ENCODE measurements at regions of chr12 and their contacts with region 1.

Region 1: DNA sequence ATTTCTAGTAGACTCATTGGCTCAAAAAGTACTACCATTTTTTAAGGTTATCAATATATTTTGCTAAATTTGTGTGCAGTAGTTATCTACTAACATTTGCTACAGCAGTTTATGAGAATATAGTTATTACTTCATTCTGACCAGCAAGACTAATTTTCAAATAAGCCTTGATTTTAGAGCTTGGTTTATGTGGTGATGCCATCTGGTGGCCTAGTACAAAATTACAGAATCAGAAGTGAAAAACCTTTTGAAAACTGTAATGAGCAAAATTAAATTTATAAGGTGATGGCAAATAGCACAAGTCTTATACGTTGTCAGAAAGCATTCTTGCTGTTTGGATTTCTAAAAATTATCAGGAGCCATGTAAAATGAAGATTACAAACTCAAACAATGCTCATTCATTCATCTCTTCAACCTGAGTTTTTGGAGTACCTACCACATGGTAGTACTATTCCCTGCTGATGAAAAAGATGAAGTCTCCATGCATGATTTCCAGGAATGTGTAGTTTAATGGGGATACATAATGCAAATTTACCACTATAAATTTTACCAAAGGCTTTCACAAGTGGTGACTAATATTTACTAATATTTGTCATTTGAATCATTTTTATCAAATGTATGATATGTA is 51.0 kb downstream of the MAGOHB start:
- DNase-seq: no peak
- CTCF ChIP-seq: peak; percentile 54

Region 2: GRCh38 chr12:10235761-10236631 is 326.4 kb before region 1 on chr12:
- CTCF ChIA-PET with region 1: interaction called, 46 read pairs
- POLR2A ChIA-PET with region 1: no interaction called
- DNase-seq: peak; percentile 40
- CTCF ChIP-seq: peak; percentile 83

Region 3: GRCh38 chr12:10331642-10332239 is 230.7 kb before region 1 on chr12:
- CTCF ChIA-PET with region 1: interaction called, 14 read pairs
- POLR2A ChIA-PET with region 1: no interaction called
- DNase-seq: peak; percentile 43
- CTCF ChIP-seq: peak; percentile 56

Measured in GM10248 (cell line).